ENCODE measurements at regions of chr5 and their contacts with region 1.

Region 1: DNA sequence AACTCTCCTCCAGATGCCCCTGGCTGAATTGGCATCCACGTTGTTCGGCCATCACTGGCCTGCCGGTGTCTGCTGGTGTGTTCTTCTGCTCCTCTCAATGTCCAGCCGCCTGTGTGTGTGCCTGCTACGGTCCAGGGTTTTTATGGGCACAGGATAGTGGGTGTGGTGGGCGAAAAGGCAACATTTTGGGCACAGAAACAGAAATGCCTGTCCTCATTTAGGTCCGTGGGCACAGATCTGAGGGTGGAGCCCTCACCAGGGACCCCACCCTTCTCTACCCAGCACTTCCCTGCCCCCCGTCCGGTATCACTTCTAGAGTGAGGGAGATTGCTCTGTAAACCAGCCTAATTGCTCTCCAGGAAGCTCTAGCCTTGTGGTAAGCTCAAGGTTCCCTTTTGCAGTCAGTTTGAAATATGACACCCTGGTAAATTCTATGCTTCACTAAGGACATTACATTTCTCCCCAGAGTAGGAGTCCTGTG is 410.1 kb downstream of the MAT2B start:
- DNase-seq: peak; percentile 38 to 87 (median 79)
- H3K4me3 ChIP-seq: peak overlapping the region in 5 of 7 experiments; percentile 26 to 62 (median 39)
- H3K27ac ChIP-seq: peak overlapping the region in 1 of 2 experiments; percentile 75
- H3K4me1 ChIP-seq: peaks cover 21 to 39% (median 29%) of the 10 kb centered on the region in 4 experiments
- H3K27me3 ChIP-seq: no peaks in the 10 kb centered on the region

Region 2: GRCh38 chr5:163898873-163899272 is 16.6 kb before region 1 on chr5:
- CTCF ChIA-PET with region 1: interaction called, 11 read pairs
- POLR2A ChIA-PET with region 1: no interaction called
- DNase-seq: no peak
- H3K4me3 ChIP-seq: no peak overlapping the region
- H3K27ac ChIP-seq: no peak overlapping the region
- H3K4me1 ChIP-seq: peaks cover 3 to 13% (median 8%) of the 10 kb centered on the region in 4 experiments
- H3K27me3 ChIP-seq: no peaks in the 10 kb centered on the region